BJ (cell line): ENCODE measurements at regions of chr20 and their contacts with region 1.

Region 1: GRCh38 chr20:5569021-5569420 is 181.2 kb upstream of the SHLD1 start:
- DNase-seq: no peak
- H3K4me3 ChIP-seq: no peak overlapping the region
- H3K27me3 ChIP-seq: no peaks in the 10 kb centered on the region
- CTCF ChIP-seq: peak; percentile 44

Region 2: DNA sequence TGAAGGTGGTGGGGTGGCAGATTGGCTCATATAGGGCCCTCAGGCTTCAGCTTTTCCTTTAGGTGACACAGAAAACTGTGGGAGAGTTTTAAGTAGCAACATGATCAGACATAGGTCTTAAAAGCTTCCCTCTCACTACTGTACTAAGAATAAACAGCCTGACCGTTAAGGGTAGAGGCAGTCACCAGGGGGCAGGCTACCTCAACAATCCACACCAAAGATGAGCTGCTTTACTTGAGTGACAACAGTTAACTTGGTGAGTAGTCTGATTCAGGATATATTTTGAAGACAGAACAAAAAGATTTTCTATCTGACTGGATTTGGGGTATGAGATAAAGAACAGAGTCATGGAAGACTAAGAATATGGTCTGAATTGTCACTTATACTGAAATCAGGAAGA is 11.9 kb before region 1 on chr20:
- CTCF ChIA-PET with region 1: interaction called, 18 read pairs
- POLR2A ChIA-PET with region 1: no interaction called
- DNase-seq: no peak
- H3K4me3 ChIP-seq: no peak overlapping the region
- H3K27me3 ChIP-seq: no peaks in the 10 kb centered on the region
- CTCF ChIP-seq: peak; percentile 69

Region 3: GRCh38 chr20:5770987-5771318 is 201.9 kb after region 1 on chr20:
- CTCF ChIA-PET with region 1: no interaction called
- POLR2A ChIA-PET with region 1: no interaction called
- DNase-seq: no peak
- H3K4me3 ChIP-seq: no peak overlapping the region
- H3K27me3 ChIP-seq: no peaks in the 10 kb centered on the region
- CTCF ChIP-seq: no peak